Ovary (tissue), 10 donors: ENCODE measurements at regions of chr7 and their contacts with region 1.

Region 1: GRCh38 chr7:95972523-95972922 is 200.2 kb downstream of the DYNC1I1 start:
- DNase-seq: peak in 4 of 5 donors; percentile 33 to 46 (median 40)
- H3K4me3 ChIP-seq: no peak overlapping the region
- H3K27ac ChIP-seq: peak overlapping the region in 1 of 2 donors; percentile 58
- H3K4me1 ChIP-seq: peaks cover 8% of the 10 kb centered on the region
- H3K27me3 ChIP-seq: no peaks in the 10 kb centered on the region
- CTCF ChIP-seq: no peak
- EP300 ChIP-seq: no peak
- POLR2A ChIP-seq: no peak

Region 2: GRCh38 chr7:96224685-96225084 is 252.2 kb after region 1 on chr7:
- intact Hi-C with region 1: loop called in 1 of 4 experiments (anchors 5 kb)
- DNase-seq: no peak
- H3K4me3 ChIP-seq: no peak overlapping the region
- H3K27ac ChIP-seq: no peak overlapping the region
- H3K4me1 ChIP-seq: no peaks in the 10 kb centered on the region
- H3K27me3 ChIP-seq: no peaks in the 10 kb centered on the region
- CTCF ChIP-seq: no peak
- EP300 ChIP-seq: no peak
- POLR2A ChIP-seq: no peak